ENCODE measurements at regions of chr2 and their contacts with region 1.

Region 1: DNA sequence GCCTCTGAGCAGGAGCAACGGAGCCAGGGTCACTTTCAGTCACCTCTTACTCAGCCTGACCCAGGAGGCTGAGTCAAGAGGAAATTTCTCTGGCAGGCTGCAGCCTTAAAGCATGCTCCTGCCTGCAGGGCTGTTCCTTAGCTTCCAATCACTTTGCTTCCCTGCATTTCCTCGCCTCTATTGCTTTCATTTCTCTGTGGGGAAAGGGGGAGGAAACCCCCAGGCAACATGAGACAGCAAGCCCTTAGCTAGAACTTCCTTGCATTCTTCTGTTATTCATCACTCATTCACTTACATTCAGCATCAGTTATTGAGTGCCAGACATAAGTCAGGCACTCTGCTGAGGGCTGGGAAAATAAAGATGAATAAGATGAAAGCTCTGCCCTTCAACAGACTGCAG is 13.0 kb downstream of the XDH start:
- DNase-seq: peak; percentile 81 to 95
- ATAC-seq: peak; percentile 95 to 96
- H3K4me3 ChIP-seq: no peak overlapping the region
- H3K27ac ChIP-seq: peak overlapping the region; percentile 84 to 89
- H3K4me1 ChIP-seq: peaks cover 54% of the 10 kb centered on the region
- CTCF ChIP-seq: no peak
- EP300 ChIP-seq: peak; percentile 82 to 84; a peak in 3 of 5 replicates
- POLR2A ChIP-seq: no peak
- RAD21 ChIP-seq: peak in 1 of 2 experiments; percentile 21; a peak in 4 of 5 replicates

Region 2: DNA sequence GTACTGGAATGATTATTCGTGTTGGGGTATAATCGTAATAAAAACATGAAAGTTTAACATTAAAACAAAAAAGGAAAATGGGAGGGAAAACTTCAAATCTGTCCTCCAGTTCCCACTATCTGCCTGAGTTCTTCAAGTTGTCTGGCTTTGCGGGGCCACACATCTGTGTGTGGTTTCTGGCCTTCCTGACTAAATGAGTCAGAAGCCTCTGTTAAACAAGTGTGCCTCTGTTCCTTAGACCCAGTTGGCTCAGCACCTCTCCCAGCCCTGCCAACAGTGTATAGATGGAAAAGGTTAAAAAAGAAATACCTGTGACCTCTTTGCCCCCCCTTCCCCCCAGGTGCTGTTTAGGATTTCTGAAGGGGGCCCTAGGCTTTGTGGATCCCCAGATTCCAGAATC is 17.2 kb before region 1 on chr2:
- CTCF ChIA-PET with region 1: interaction called, 81 read pairs
- POLR2A ChIA-PET with region 1: interaction called, 21 read pairs
- DNase-seq: peak; percentile 81 to 89
- ATAC-seq: peak; percentile 88
- H3K4me3 ChIP-seq: no peak overlapping the region
- H3K27ac ChIP-seq: peak overlapping the region; percentile 88 to 89
- H3K4me1 ChIP-seq: peaks cover 57% of the 10 kb centered on the region
- CTCF ChIP-seq: no peak
- EP300 ChIP-seq: no peak
- POLR2A ChIP-seq: no peak
- RAD21 ChIP-seq: no peak

Region 3: DNA sequence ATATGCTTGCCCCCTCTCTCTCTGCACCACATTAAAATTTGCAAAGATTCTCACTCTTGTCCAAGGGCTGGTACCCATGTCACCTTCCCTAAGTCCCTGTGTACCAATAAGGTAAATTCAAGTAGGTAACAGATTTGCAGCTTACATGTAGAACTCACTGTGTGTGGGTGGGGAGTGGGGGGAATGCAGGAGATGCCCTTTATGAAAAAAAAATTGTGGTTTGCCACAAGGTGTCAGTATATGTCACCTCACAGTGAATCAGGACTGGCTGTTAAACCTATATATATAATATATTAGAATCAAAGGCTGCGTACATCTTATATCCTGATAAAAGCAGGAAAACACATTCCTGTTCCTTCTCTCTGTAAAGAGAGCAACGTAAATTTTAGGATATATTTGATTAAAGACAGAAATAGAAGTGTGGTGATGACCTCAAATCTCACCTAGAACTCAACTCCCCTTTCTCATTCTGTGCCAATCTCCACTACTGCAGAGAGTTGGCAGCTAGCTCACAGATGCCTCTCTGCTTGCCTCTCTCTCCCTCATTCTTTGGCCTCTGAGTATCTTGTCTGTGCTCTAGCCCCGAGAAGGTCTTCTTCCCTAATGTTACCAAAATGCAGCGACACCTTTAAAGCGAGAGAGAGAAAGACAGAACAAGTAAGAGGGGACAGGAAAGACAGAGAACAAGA is 12.4 kb after region 1 on chr2:
- CTCF ChIA-PET with region 1: interaction called, 11 read pairs
- POLR2A ChIA-PET with region 1: interaction called, 3 read pairs
- DNase-seq: peak in 1 of 2 experiments; percentile 36
- ATAC-seq: peak; percentile 51 to 80; a peak in 4 of 6 replicates
- H3K4me3 ChIP-seq: 0 out of 3 replicates have a peak overlapping the region, but pooled peaks have one; percentile 5
- H3K27ac ChIP-seq: peak overlapping the region; percentile 58 to 76
- H3K4me1 ChIP-seq: peaks cover 50% of the 10 kb centered on the region
- CTCF ChIP-seq: peak; percentile 58
- EP300 ChIP-seq: no peak
- POLR2A ChIP-seq: no peak
- RAD21 ChIP-seq: peak; percentile 58 to 64

Region 4: DNA sequence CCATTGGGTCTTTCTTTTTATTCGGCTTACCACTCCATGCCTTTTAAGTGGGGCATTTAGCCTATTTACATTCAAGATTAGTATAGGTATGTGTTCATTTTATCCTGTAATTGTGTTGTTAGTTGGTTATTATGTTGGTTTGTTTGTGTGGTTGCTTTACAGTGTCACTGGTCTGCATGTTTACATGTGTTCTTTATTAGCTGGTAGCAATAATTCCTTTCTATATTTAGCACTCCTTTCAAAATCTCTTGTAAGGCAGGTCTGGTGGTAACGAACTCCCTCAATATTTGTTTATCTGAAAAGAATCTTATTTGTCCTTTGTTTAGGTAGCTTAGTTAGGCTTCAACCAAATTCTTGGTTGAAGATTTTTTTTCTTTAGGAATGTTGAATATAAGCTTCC is 81.7 kb after region 1 on chr2:
- CTCF ChIA-PET with region 1: no interaction called
- POLR2A ChIA-PET with region 1: no interaction called
- DNase-seq: no peak
- ATAC-seq: no peak
- H3K4me3 ChIP-seq: no peak overlapping the region
- H3K27ac ChIP-seq: no peak overlapping the region
- H3K4me1 ChIP-seq: no peaks in the 10 kb centered on the region
- CTCF ChIP-seq: no peak
- EP300 ChIP-seq: no peak
- POLR2A ChIP-seq: no peak
- RAD21 ChIP-seq: no peak

Region 5: DNA sequence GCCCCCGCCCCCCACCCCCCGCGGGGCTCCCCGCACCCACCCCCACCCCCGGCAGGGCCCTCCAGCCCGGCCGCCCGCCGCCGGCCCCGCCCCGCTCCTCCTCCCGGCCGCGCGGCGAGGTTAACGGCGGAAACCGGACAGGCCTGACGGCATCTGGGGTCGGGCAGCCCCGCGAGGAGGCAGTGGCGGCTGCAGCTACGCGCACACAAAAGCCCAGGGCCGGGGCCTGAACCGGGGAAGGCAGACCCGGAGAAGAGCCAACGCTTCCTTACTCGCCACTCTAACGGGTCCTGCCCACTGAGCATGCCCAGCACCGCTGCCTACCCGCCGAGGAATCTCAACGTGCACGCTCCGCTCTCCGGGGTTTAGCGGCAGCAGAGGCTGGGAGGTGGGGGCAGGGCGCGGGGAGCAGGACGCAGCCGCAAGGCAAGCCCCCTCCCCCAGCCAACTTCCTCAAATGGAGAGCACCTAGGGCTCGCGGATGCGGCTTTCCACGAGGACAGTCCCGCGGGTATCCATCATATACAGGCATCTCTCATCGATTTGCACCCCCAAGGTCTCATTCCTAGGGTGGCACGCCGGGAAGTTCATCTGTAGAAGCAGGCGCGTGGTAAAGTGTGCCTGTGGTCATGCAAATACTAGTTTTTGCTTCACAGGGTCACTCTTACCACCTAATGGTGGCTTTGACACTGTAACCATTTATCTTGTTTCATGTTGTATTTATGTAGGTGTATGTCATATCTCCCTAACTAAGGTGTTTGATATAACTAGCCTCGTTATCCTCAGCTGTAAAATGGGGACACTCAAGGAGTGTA is 609.3 kb after region 1 on chr2 and contains the start of gene MEMO1:
- CTCF ChIA-PET with region 1: no interaction called
- POLR2A ChIA-PET with region 1: no interaction called
- DNase-seq: peak; percentile 97 to 98
- ATAC-seq: peak; percentile 78 to 84
- H3K4me3 ChIP-seq: peak within 1 kb of the TSS; percentile 96
- H3K27ac ChIP-seq: peak within 1 kb of the TSS; percentile 97 to 99
- H3K4me1 ChIP-seq: peaks cover 37% of the 10 kb centered on the region
- CTCF ChIP-seq: no peak
- EP300 ChIP-seq: peak in 1 of 2 experiments; percentile 5; a peak in 1 of 5 replicates
- POLR2A ChIP-seq: peak; percentile 79
- RAD21 ChIP-seq: peak; percentile 19 to 44; a peak in 4 of 5 replicates
- polyA plus RNA-seq, gene MEMO1: 72.9 and 87.0 TPM in 2 replicates

Measured in A549 (cell line).